ENCODE measurements at regions of chr9 and their contacts with region 1.

Region 1: GRCh38 chr9:6566409-6567139 is 79.0 kb downstream of the GLDC start:
- DNase-seq: peak; percentile 42
- ATAC-seq: peak; percentile 74
- H3K4me3 Mint-ChIP-seq: no peak overlapping the region
- H3K27ac Mint-ChIP-seq: peak overlapping the region; percentile 30
- H3K4me1 Mint-ChIP-seq: peaks cover 3% of the 10 kb centered on the region
- H3K27me3 Mint-ChIP-seq: peaks cover 2% of the 10 kb centered on the region
- CTCF ChIP-seq: no peak

Region 2: GRCh38 chr9:6353851-6354686 is 212.5 kb before region 1 on chr9:
- CTCF ChIA-PET with region 1: interaction called, 152 read pairs
- POLR2A ChIA-PET with region 1: no interaction called
- intact Hi-C with region 1: loop called (anchors 2 kb)
- DNase-seq: peak; percentile 28
- ATAC-seq: peak; percentile 93
- H3K4me3 Mint-ChIP-seq: no peak overlapping the region
- H3K27ac Mint-ChIP-seq: no peak overlapping the region
- H3K4me1 Mint-ChIP-seq: peaks cover 6% of the 10 kb centered on the region
- H3K27me3 Mint-ChIP-seq: peaks cover 13% of the 10 kb centered on the region
- CTCF ChIP-seq: peak; percentile 83

Region 3: DNA sequence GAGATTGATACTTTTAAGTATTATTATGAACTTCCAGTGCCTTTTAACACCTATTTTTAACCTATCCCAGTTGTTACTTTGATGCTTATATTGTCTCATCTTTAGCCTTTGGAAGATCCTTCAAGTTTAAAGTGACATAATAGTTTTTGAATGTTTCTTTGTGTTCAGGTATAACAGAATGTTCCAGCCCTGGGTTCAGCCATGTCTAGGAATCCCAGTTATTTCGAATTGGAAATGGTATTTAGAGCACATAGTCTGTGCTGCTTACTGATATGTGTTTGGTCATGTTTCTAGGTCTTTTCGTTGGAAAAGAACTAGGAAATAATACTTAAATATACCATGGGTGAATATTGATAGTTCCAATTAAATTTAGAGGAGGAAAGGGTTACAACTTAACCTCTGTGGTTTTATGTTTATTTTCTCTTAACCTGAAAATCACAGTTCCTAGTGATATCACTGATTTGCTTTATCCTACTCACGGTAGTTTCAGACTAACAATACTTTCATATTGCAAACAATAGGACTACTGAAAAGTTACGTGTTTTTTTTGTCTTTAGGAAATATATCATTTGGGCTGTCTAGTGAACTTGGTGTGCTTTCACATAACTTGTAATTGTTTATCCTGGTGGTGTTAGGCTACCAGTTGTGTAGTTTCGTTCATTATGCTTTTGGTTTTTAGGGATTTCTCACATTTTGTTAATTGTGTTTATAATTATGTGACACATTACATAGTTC is 115.8 kb before region 1 on chr9:
- CTCF ChIA-PET with region 1: no interaction called
- POLR2A ChIA-PET with region 1: no interaction called
- intact Hi-C with region 1: no loop called
- DNase-seq: no peak
- ATAC-seq: no peak
- H3K4me3 Mint-ChIP-seq: no peak overlapping the region
- H3K27ac Mint-ChIP-seq: peak overlapping the region; percentile 38
- H3K4me1 Mint-ChIP-seq: peaks cover 54% of the 10 kb centered on the region
- H3K27me3 Mint-ChIP-seq: no peaks in the 10 kb centered on the region
- CTCF ChIP-seq: no peak

Region 4: GRCh38 chr9:6506571-6506970 is 60.0 kb before region 1 on chr9:
- CTCF ChIA-PET with region 1: no interaction called
- POLR2A ChIA-PET with region 1: no interaction called
- intact Hi-C with region 1: loop called (anchors 10 kb)
- DNase-seq: no peak
- ATAC-seq: no peak
- H3K4me3 Mint-ChIP-seq: no peak overlapping the region
- H3K27ac Mint-ChIP-seq: no peak overlapping the region
- H3K4me1 Mint-ChIP-seq: no peaks in the 10 kb centered on the region
- H3K27me3 Mint-ChIP-seq: no peaks in the 10 kb centered on the region
- CTCF ChIP-seq: no peak

Measured in activated CD8-positive, alpha-beta T cell treated with anti-CD3 and anti-CD28 coated beads for 36 hours (primary cell).